GM12878 (cell line): ENCODE measurements at regions of chr18 and their contacts with region 1.

Region 1: DNA sequence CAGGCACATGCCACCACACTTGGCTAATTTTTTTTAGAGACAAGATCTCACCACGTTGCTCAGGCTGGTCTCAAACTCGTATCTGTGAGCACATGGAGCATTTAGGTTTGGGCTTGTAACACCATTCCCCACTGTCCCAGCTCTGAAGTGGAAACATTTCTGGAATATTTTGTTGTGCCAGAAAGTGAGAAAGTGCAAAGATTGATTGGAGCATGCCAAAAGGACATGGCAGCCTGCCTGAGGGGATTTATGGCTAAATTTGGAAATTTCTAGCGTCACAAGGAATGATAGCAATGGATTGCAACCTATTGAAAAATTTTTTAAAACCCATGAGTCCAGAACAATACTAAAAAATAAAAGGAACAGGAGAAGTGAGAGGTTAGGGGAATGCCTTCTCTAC is 136.8 kb downstream of the ESCO1 start:
- DNase-seq: no peak
- ATAC-seq: no peak
- H3K4me3 ChIP-seq: no peak overlapping the region
- H3K27ac ChIP-seq: no peak overlapping the region
- H3K4me1 ChIP-seq: no peaks in the 10 kb centered on the region
- H3K27me3 ChIP-seq: no peaks in the 10 kb centered on the region
- CTCF ChIP-seq: no peak
- EP300 ChIP-seq: no peak
- POLR2A ChIP-seq: no peak
- RAD21 ChIP-seq: no peak

Region 2: GRCh38 chr18:21513292-21513691 is 49.6 kb after region 1 on chr18:
- CTCF ChIA-PET with region 1: no interaction called
- POLR2A ChIA-PET with region 1: no interaction called
- RAD21 ChIA-PET with region 1: no interaction called
- SMC1A ChIA-PET with region 1: no interaction called
- in situ Hi-C with region 1: loop called (anchors 5 kb)
- intact Hi-C with region 1: no loop called
- DNase-seq: no peak
- ATAC-seq: no peak
- H3K4me3 ChIP-seq: no peak overlapping the region
- H3K27ac ChIP-seq: no peak overlapping the region
- H3K4me1 ChIP-seq: no peaks in the 10 kb centered on the region
- H3K27me3 ChIP-seq: no peaks in the 10 kb centered on the region
- CTCF ChIP-seq: no peak
- EP300 ChIP-seq: no peak
- POLR2A ChIP-seq: no peak
- RAD21 ChIP-seq: no peak